Left lung (tissue), 14 donors: ENCODE measurements at regions of chr11 and their contacts with region 1.

Region 1: GRCh38 chr11:57751676-57752253 is at the start of gene BTBD18:
- DNase-seq: no peak
- ATAC-seq: peak; percentile 94
- H3K4me3 ChIP-seq: no peak within 1 kb of the TSS
- H3K27ac ChIP-seq: peak within 1 kb of the TSS in 1 of 2 donors; percentile 2
- H3K4me1 ChIP-seq: peaks cover 0 to 7% of the 10 kb centered on the region in 2 donors
- H3K27me3 ChIP-seq: no peaks in the 10 kb centered on the region
- CTCF ChIP-seq: peak; percentile 52 to 53
- polyA plus RNA-seq, gene BTBD18: 0.21 to 0.56 (median 0.31) TPM

Region 2: DNA sequence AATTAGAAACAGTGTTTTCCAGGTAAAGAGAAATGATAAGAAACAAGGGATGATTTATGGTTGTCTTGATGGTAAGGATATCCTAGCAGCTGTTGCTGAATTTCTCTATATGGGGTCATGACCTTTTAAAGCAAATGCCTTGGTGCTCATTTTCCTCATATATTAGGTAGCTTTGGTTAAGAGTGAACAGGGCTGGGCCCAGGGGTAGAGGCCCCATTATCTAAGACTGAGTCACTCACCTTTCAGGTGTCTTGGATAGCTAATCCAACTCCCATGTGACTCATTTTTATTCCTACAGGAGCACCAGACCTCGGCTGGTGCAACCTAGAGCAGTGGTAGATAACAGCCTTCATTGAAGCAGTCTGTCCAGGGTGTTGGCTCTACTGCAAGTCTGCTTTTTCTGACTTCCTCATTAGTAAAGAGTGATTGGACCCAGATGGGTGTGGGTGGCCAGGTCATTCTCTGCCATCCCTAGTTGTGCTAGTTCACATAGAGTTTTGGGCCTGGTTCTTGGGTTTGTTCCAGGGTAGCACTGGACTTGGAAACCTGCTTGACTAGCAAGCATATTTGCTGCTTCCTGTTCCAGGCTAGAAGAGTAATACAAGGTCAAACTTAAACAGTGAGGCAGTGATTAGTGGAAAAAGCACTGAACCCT is 47.3 kb after region 1 on chr11:
- intact Hi-C with region 1: loop called in 1 of 2 experiments (anchors 5 kb)
- DNase-seq: peak in 2 of 4 donors; percentile 36 to 56
- ATAC-seq: peak; percentile 82
- H3K4me3 ChIP-seq: no peak overlapping the region
- H3K27ac ChIP-seq: peak overlapping the region; percentile 50 to 74
- H3K4me1 ChIP-seq: peaks cover 22 to 66% of the 10 kb centered on the region in 2 donors
- H3K27me3 ChIP-seq: no peaks in the 10 kb centered on the region
- CTCF ChIP-seq: no peak